IMR-90 (cell line): ENCODE measurements at regions of chr7 and their contacts with region 1.

Region 1: GRCh38 chr7:83259064-83259463 is 96.4 kb upstream of the PCLO start:
- DNase-seq: no peak
- ATAC-seq: no peak
- H3K4me3 ChIP-seq: no peak overlapping the region
- H3K27ac ChIP-seq: no peak overlapping the region
- H3K4me1 ChIP-seq: no peaks in the 10 kb centered on the region
- H3K27me3 ChIP-seq: no peaks in the 10 kb centered on the region
- CTCF ChIP-seq: no peak
- POLR2A ChIP-seq: no peak
- RAD21 ChIP-seq: no peak

Region 2: GRCh38 chr7:83313931-83314330 is 54.9 kb after region 1 on chr7:
- CTCF ChIA-PET with region 1: no interaction called
- POLR2A ChIA-PET with region 1: no interaction called
- dilution Hi-C with region 1: no loop called
- in situ Hi-C with region 1: no loop called
- intact Hi-C with region 1: loop called (anchors 10 kb)
- DNase-seq: no peak
- ATAC-seq: no peak
- H3K4me3 ChIP-seq: no peak overlapping the region
- H3K27ac ChIP-seq: no peak overlapping the region
- H3K4me1 ChIP-seq: no peaks in the 10 kb centered on the region
- H3K27me3 ChIP-seq: no peaks in the 10 kb centered on the region
- CTCF ChIP-seq: no peak
- POLR2A ChIP-seq: no peak
- RAD21 ChIP-seq: no peak

Region 3: GRCh38 chr7:83468251-83468739 is 209.2 kb after region 1 on chr7:
- CTCF ChIA-PET with region 1: no interaction called
- POLR2A ChIA-PET with region 1: no interaction called
- dilution Hi-C with region 1: no loop called
- in situ Hi-C with region 1: no loop called
- intact Hi-C with region 1: no loop called
- DNase-seq: peak; percentile 99
- ATAC-seq: peak; percentile 88
- H3K4me3 ChIP-seq: no peak overlapping the region
- H3K27ac ChIP-seq: peak overlapping the region; percentile 53; the same call in 1 of the 2 replicates
- H3K4me1 ChIP-seq: no peaks in the 10 kb centered on the region
- H3K27me3 ChIP-seq: peaks cover 1% of the 10 kb centered on the region; the same call in 1 of the 2 replicates
- CTCF ChIP-seq: no peak
- POLR2A ChIP-seq: no peak
- RAD21 ChIP-seq: 0 out of 2 replicates have a peak, but pooled peaks have one; percentile 7